Activated CD8-positive, alpha-beta T cell treated with anti-CD3 and anti-CD28 coated beads for 36 hours (primary cell): ENCODE measurements at regions of chr14 and their contacts with region 1.

Region 1: DNA sequence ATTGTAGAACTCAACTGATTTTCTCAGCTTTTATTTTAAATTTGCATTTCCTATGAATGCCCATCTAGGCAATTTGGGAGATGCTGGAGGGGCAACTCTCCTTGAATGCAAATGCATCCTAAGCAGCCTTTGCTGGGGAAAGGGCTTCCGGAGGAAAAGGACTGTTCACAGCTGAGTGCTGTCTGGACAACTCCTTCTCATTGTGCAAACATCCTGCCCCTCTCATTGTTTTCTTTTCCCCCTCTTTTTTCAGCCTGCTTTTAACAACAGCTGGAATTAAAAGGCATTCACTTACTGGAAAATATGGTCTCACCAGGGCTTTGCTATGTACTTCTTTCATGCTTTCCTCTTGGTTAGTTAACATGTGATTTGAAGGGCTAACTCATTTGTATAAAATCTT is 397.8 kb downstream of the FUT8 start:
- DNase-seq: no peak
- ATAC-seq: no peak
- H3K4me3 Mint-ChIP-seq: no peak overlapping the region
- H3K27ac Mint-ChIP-seq: no peak overlapping the region
- H3K4me1 Mint-ChIP-seq: no peaks in the 10 kb centered on the region
- H3K27me3 Mint-ChIP-seq: no peaks in the 10 kb centered on the region
- CTCF ChIP-seq: no peak

Region 2: GRCh38 chr14:66038618-66039017 is 228.3 kb after region 1 on chr14:
- CTCF ChIA-PET with region 1: no interaction called
- POLR2A ChIA-PET with region 1: no interaction called
- intact Hi-C with region 1: loop called (anchors 10 kb)
- DNase-seq: no peak
- ATAC-seq: no peak
- H3K4me3 Mint-ChIP-seq: no peak overlapping the region
- H3K27ac Mint-ChIP-seq: no peak overlapping the region
- H3K4me1 Mint-ChIP-seq: no peaks in the 10 kb centered on the region
- H3K27me3 Mint-ChIP-seq: peaks cover 9% of the 10 kb centered on the region
- CTCF ChIP-seq: no peak